ENCODE measurements at regions of chr17 and their contacts with region 1.

Region 1: DNA sequence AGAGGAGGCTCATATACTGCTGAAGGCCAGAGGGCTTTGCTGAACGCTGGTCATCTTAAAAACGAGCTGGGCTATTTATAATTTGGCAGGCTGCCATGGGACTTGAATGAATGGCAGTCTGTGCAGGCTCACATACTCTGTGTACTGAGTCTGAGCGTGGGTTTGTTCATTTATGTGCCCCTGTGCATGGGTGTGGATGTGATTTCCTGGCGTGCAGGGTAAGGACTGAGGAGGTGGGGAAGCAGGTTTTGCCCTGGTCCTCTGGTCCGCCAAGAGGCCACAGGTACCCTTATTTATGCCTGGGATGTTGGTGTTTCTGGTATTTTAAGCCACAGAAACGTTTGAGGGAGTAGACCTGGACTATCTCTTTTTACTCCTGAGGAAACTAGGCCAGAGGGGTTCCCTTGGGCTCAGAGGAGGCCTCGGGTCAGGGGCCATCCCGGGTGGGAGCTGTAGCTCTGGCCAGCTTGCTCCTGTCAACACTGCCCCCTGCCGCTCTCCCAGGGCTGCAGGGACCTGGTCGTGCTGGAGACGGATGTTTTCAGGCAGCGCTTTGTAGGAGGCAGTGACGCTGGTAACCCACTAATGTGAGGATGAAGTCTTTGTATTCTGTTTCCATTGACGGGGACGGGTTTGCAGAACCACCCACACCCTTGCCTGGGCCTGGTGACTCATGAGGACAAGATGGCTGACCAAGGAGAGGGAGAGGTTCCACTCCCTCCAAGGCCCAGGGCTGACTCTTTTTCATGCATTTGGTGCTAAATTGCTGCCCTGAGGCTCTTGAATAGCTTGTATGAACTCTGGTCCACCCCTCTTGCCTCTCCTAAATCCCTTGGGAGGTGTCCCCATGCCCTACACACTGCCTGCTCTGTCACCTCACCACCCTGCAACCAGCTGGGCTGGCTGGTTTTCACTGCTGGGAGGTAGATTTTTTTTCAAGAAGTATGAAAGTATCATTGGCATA is 184.5 kb downstream of the MSI2 start:
- DNase-seq: peak; percentile 87 to 98 (median 96)
- H3K4me3 ChIP-seq: peak overlapping the region in 3 of 7 experiments; percentile 4 to 9 (median 6)
- H3K27ac ChIP-seq: peak overlapping the region; percentile 89 to 93
- H3K4me1 ChIP-seq: peaks cover 31 to 99% (median 98%) of the 10 kb centered on the region in 4 experiments
- H3K27me3 ChIP-seq: no peaks in the 10 kb centered on the region

Region 2: DNA sequence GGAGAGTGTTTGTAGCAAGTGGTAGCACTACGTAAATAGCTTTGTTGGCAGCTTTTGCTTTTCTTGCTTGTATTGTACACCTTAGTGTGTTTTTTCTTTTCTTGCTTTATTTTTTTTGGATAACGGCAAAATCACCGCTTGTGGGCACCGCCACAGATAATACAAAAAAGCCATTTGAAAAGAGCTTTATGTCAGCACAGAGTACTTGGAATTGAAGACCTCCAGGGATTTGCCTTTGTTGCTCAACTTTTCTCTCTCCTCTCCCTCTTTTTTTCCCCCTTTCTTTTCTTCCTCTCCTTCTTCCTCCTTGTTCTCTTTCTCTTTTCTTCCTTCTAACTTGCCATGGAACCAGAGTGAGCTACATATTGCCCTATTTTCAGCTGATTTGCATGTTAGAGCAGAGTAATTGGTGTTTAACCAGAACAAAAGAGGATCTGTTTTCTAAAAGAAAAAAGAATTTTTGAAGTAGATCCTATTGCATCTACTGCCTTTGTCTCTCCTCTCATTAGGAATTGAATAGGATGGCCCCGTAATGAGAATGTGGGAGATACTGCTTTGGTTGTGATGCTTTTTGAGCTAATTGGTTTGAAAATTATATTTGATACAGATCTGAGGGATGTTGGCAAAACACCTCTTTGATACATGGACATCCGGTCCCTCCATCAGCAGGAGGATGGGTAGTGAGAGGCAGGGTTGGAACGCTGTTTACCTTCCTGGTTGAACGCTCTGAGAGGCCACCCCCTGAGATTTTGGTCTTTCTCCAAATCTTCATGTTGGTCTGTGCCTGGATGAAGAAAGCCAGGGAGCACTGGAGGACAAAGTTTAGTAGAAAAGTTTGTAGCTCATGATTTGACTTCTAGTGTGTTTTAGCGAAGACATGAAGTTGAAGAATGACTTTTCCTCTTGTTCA is 98.9 kb before region 1 on chr17:
- CTCF ChIA-PET with region 1: no interaction called
- POLR2A ChIA-PET with region 1: no interaction called
- DNase-seq: no peak
- H3K4me3 ChIP-seq: no peak overlapping the region
- H3K27ac ChIP-seq: no peak overlapping the region
- H3K4me1 ChIP-seq: peaks cover 2 to 71% (median 48%) of the 10 kb centered on the region in 4 experiments
- H3K27me3 ChIP-seq: no peaks in the 10 kb centered on the region

Region 3: GRCh38 chr17:57455063-57455914 is 14.5 kb after region 1 on chr17:
- CTCF ChIA-PET with region 1: interaction called, 20 read pairs
- POLR2A ChIA-PET with region 1: interaction called, 14 read pairs
- DNase-seq: peak; percentile 96 to 100 (median 99)
- H3K4me3 ChIP-seq: peak overlapping the region in 4 of 7 experiments; percentile 19 to 39 (median 28)
- H3K27ac ChIP-seq: peak overlapping the region; percentile 77 to 85
- H3K4me1 ChIP-seq: peaks cover 22 to 93% (median 84%) of the 10 kb centered on the region in 4 experiments
- H3K27me3 ChIP-seq: no peaks in the 10 kb centered on the region

Region 4: DNA sequence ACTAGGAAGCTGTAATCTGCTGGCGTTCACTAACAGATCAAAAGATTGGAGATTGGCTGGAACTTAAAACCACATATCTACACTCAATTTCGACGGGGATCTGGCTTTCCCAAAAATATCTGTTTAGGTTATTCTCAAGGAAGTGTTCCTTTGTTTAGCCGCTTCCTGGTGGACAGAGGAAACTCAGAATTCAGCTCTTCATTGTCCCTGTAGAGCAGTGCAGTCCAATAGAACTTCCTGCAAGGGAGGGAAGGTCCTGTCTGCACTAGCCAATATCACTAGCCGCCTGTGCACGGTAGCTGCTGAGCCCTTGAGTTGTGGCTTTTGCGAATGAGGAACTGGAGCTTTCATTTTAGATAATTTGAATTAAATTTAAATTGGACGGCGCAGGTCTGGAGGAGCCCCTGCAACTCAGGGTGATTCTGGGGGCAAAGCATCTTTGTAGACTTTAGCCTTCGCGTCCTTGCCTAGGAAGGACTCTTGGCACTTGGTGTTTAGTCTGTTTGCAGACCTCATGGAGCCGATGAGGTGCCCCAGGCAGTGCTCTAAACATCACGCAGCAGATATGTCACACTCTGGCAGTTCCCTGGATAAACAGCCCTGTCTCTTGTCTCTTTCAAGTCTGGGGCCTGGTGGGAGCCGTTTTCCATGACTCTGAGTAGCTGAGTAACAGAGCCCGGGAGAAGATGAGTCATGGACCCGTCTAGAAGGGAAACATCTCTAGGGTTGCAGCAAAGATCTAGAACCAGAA is 182.1 kb after region 1 on chr17:
- CTCF ChIA-PET with region 1: no interaction called
- POLR2A ChIA-PET with region 1: no interaction called
- DNase-seq: peak in 2 of 3 donors; percentile 56 to 68
- H3K4me3 ChIP-seq: no peak overlapping the region
- H3K27ac ChIP-seq: no peak overlapping the region
- H3K4me1 ChIP-seq: peaks cover 0 to 8% (median 8%) of the 10 kb centered on the region in 4 experiments
- H3K27me3 ChIP-seq: no peaks in the 10 kb centered on the region

Measured in common myeloid progenitor, CD34-positive (primary cell).